Activated CD8-positive, alpha-beta memory T cell treated with anti-CD3 and anti-CD28 coated beads, Interleukin-2, amount 10 ng/mL, durations not matched to agents 7 days and 5 days (primary cell): ENCODE measurements at regions of chr2 and their contacts with region 1.

Region 1: DNA sequence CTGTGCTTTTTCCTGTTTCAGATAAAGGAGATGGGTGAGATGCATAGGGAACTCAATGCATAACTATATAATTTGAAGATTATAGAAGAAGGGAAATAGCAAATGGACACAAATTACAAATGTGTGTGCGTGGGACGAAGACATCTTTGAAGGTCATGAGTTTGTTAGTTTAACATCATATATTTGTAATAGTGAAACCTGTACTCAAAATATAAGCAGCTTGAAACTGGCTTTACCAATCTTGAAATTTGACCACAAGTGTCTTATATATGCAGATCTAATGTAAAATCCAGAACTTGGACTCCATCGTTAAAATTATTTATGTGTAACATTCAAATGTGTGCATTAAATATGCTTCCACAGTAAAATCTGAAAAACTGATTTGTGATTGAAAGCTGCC is 16.4 kb upstream of the MSH2 start:
- DNase-seq: no peak
- ATAC-seq: no peak
- H3K4me3 Mint-ChIP-seq: no peak overlapping the region
- H3K27ac Mint-ChIP-seq: no peak overlapping the region
- H3K4me1 Mint-ChIP-seq: peaks cover 3% of the 10 kb centered on the region
- H3K27me3 Mint-ChIP-seq: peaks cover 13% of the 10 kb centered on the region

Region 2: GRCh38 chr2:47336259-47337238 is 50.0 kb before region 1 on chr2:
- CTCF ChIA-PET with region 1: interaction called, 74 read pairs
- DNase-seq: no peak
- ATAC-seq: no peak
- H3K4me3 Mint-ChIP-seq: no peak overlapping the region
- H3K27ac Mint-ChIP-seq: no peak overlapping the region
- H3K4me1 Mint-ChIP-seq: no peaks in the 10 kb centered on the region
- H3K27me3 Mint-ChIP-seq: peaks cover 15% of the 10 kb centered on the region

Region 3: GRCh38 chr2:47373747-47374146 is 12.8 kb before region 1 on chr2:
- CTCF ChIA-PET with region 1: interaction called, 17 read pairs
- DNase-seq: no peak
- ATAC-seq: no peak
- H3K4me3 Mint-ChIP-seq: no peak overlapping the region
- H3K27ac Mint-ChIP-seq: no peak overlapping the region
- H3K4me1 Mint-ChIP-seq: peaks cover 2% of the 10 kb centered on the region
- H3K27me3 Mint-ChIP-seq: peaks cover 32% of the 10 kb centered on the region